Sigmoid colon (tissue), 7 donors: ENCODE measurements at regions of chr2 and their contacts with region 1.

Region 1: GRCh38 chr2:235050992-235051351 is 99.2 kb downstream of the SH3BP4 start:
- DNase-seq: peak; percentile 95
- H3K4me3 ChIP-seq: peak overlapping the region in 2 of 4 donors; percentile 11 to 21
- H3K27ac ChIP-seq: peak overlapping the region; percentile 47 to 81 (median 78)
- H3K4me1 ChIP-seq: peaks cover 0 to 23% (median 10%) of the 10 kb centered on the region in 4 donors
- H3K27me3 ChIP-seq: no peaks in the 10 kb centered on the region
- CTCF ChIP-seq: no peak
- EP300 ChIP-seq: peak in 2 of 4 donors; percentile 56 to 88
- POLR2A ChIP-seq: no peak

Region 2: GRCh38 chr2:234550511-234551107 is 500.4 kb before region 1 on chr2:
- intact Hi-C with region 1: loop called (anchors 5 kb)
- DNase-seq: peak; percentile 79
- H3K4me3 ChIP-seq: no peak overlapping the region
- H3K27ac ChIP-seq: no peak overlapping the region
- H3K4me1 ChIP-seq: no peaks in the 10 kb centered on the region
- H3K27me3 ChIP-seq: peaks cover 0 to 3% (median 0%) of the 10 kb centered on the region in 3 donors
- CTCF ChIP-seq: peak; percentile 89 to 96 (median 92)
- EP300 ChIP-seq: no peak
- POLR2A ChIP-seq: no peak

Region 3: DNA sequence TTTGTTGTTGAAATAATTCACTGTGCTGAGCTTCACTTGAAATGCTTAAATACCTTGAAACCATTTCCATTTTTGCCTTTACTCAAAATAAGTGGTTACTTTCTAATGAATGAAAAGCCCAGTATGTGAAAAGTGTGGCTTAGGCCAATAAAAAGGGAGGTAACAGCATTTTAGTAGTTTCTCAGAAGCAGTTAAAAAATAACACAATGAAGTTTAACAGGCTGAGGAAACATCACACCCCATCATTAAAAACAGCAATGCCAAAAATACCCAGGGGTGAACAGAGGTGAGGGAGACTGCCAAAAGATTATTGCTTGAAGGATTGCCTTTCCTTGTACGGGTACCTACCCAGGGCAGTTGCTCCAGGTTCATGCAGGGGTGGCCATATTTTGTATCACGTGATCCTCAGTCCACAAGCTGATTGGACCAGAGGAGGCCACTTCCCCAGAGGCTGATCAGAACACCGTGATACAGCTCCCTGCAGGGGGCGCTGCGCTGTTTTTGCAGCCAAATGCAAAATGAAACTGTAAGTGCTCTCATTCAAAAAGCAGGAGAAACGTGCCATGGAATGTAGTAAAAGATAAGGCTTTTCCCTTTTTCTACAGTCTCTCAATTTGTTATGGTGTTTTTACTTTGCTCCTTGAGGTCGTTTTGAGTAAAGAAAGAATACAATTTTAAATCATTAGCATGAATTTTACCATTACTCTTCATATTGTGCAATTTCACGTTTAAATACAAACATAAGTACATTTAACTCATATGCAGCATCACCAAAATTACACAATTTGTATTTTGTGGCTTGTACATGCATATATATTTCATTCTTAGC is 169.3 kb before region 1 on chr2:
- intact Hi-C with region 1: loop called (anchors 5 kb)
- DNase-seq: peak; percentile 72
- H3K4me3 ChIP-seq: no peak overlapping the region
- H3K27ac ChIP-seq: no peak overlapping the region
- H3K4me1 ChIP-seq: peaks cover 0 to 18% (median 7%) of the 10 kb centered on the region in 4 donors
- H3K27me3 ChIP-seq: no peaks in the 10 kb centered on the region
- CTCF ChIP-seq: peak in 3 of 4 experiments; percentile 54 to 74 (median 65)
- EP300 ChIP-seq: no peak
- POLR2A ChIP-seq: no peak

Region 4: GRCh38 chr2:234951664-234952269 is 99.2 kb before region 1 on chr2 and contains the start of gene SH3BP4:
- intact Hi-C with region 1: loop called (anchors 2 kb)
- DNase-seq: peak; percentile 86
- H3K4me3 ChIP-seq: peak within 1 kb of the TSS; percentile 70 to 97 (median 83)
- H3K27ac ChIP-seq: peak within 1 kb of the TSS; percentile 81 to 95 (median 88)
- H3K4me1 ChIP-seq: peaks cover 0 to 53% (median 44%) of the 10 kb centered on the region in 4 donors
- H3K27me3 ChIP-seq: no peaks in the 10 kb centered on the region
- CTCF ChIP-seq: no peak
- EP300 ChIP-seq: no peak
- POLR2A ChIP-seq: peak in 1 of 2 donors; percentile 21
- total RNA-seq, gene SH3BP4: 11.4 to 22.8 (median 19.1) TPM